Psoas muscle (tissue), 8 donors: ENCODE measurements at regions of chr3 and their contacts with region 1.

Region 1: DNA sequence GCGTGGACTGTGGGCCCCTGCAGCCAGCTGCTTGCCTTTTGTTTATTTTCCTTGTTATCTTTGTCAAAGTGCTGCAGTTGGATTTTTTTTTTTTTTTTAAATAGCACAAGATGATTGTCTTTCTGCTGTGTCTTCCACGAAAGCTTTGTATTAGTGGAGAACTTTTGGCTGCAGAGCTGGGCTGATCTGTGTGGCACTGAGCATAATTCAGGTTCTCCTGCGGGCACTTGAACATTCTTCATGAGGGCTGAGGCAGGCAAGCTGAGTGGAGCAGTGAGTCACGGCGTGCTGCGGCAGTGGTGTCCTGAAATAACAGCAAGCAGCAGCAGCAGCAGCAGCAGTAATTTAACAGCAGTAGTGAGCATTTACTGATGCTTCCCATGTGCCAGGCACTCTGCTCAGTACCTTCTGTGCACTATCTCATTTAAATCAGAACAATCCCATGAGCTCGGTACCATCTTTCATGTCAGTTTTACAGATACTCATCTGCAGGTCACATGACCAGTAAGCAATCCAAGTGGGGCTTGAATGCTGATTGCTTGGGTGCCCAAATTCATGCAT is 45.8 kb downstream of the MITF start:
- DNase-seq: peak; percentile 71 to 86
- ATAC-seq: peak; percentile 93 to 98 (median 96)
- H3K4me3 ChIP-seq: no peak overlapping the region
- H3K27ac ChIP-seq: peak overlapping the region; percentile 74
- H3K4me1 ChIP-seq: peaks cover 64% of the 10 kb centered on the region
- H3K27me3 ChIP-seq: no peaks in the 10 kb centered on the region
- CTCF ChIP-seq: no peak

Region 2: GRCh38 chr3:69739204-69740102 is 45.6 kb before region 1 on chr3 and contains the start of gene MITF:
- intact Hi-C with region 1: loop called (anchors 5 kb)
- DNase-seq: peak; percentile 94 to 96
- ATAC-seq: peak; percentile 91 to 94 (median 92)
- H3K4me3 ChIP-seq: peak within 1 kb of the TSS; percentile 94
- H3K27ac ChIP-seq: peak within 1 kb of the TSS; percentile 93
- H3K4me1 ChIP-seq: peaks cover 41% of the 10 kb centered on the region
- H3K27me3 ChIP-seq: no peaks in the 10 kb centered on the region
- CTCF ChIP-seq: no peak
- total RNA-seq, gene MITF: 48.2 to 98.1 (median 62.8) TPM

Region 3: DNA sequence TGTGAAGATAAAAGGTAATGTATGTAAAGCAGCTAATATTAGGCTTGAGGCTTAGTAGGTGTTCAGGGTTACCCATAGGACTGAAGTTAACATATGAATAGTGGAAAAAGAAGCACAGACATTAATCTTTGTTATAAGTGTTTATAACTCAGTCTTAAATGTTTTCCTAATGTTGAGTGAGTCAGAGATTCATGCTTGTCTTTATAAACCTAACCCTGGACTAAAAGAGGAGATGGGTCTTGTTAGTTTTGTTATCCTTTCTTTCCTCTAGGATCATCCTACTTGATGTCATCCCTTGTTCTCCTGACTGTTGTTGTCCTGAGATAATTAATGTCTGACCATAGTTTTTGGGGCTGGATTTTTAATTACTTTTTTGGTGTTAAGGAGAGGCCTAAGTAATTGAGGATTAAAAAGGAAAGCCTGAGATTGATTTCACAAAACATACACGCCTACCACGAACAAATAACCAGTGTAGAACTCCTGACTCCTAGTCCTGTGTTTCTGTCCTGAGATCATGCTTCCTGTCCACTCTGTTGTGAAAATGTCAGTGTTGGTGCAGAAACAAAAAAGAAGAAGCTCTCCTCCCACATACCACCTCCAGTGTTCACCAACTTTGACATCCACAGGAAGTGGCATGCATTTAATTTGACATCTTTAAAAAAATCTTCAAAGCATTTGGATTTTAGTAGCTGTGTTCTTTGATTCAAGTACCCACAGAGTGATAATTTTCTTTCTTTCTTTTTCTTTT is 37.3 kb before region 1 on chr3:
- intact Hi-C with region 1: loop called (anchors 5 kb)
- DNase-seq: no peak
- ATAC-seq: no peak
- H3K4me3 ChIP-seq: no peak overlapping the region
- H3K27ac ChIP-seq: peak overlapping the region; percentile 64
- H3K4me1 ChIP-seq: peaks cover 87% of the 10 kb centered on the region
- H3K27me3 ChIP-seq: no peaks in the 10 kb centered on the region
- CTCF ChIP-seq: no peak

Region 4: DNA sequence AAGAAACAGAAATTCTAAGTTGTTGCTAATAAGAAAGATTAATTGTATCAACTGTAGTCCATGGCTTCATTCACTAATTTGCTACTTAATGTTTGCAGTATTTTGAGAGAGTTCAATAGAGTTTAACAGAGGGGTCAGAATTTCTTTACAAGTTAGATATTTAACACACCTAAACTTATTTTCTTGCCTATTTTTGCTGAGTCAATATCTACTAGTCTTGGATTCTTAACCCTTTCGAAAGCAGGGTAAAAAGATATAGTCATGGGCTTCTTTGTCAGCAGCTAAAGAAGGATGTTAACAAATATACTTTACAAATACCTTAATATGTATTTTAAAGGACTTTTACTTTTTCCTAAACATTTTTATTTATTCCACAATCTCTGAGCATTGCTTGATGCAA is 371.8 kb after region 1 on chr3:
- intact Hi-C with region 1: no loop called
- DNase-seq: no peak
- ATAC-seq: no peak
- H3K4me3 ChIP-seq: no peak overlapping the region
- H3K27ac ChIP-seq: no peak overlapping the region
- H3K4me1 ChIP-seq: no peaks in the 10 kb centered on the region
- H3K27me3 ChIP-seq: no peaks in the 10 kb centered on the region
- CTCF ChIP-seq: no peak